Right ventricle myocardium inferior (tissue), 1 donor: ENCODE measurements at regions of chr5 and their contacts with region 1.

Region 1: DNA sequence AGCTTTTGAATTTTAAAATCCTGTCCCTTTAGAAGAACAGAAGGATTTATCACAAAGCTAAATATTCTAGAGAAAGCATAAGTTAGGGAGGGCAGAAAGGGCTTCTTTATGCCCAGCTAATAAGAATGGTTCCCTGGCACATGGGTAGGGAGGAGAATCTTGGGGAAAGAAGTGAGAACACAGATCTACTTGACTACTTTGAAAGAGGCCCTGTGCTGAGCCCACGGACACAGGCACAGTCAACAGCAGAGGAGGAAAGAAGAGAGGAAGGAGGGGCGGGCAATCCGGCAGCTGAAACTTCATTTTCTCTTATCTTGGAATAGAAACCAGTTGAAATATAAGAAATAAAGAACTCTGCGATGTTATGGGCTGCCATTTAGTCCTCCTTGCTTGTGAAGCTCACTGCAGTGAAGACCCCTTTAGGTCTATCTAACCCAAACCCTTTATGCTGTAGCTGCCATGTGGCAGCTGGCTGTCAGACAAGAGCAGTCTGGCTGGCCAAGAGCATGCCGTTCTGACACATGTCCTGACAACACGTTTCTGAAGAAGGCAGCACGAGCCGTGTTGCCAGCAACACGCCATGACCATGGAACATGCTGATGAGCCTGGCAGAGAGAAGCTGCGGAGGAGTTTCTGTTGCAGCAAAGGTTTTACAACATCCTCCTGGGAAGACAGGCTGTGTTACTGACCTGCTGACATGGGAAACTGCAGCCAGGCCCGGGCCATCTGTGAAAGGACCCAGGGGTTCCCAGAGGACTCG is 34.2 kb downstream of the ABLIM3 start:
- DNase-seq: peak; percentile 82
- ATAC-seq: peak; percentile 88

Region 2: GRCh38 chr5:148826053-148826738 is 349.3 kb before region 1 on chr5 and contains the start of gene ADRB2:
- intact Hi-C with region 1: no loop called
- DNase-seq: peak; percentile 99
- ATAC-seq: peak; percentile 97
- total RNA-seq, gene ADRB2: 5.5 TPM

Region 3: GRCh38 chr5:149141224-149141956 is 34.1 kb before region 1 on chr5 and contains the start of gene ABLIM3:
- intact Hi-C with region 1: loop called (anchors 5 kb)
- DNase-seq: peak; percentile 89
- ATAC-seq: peak; percentile 88
- total RNA-seq, gene ABLIM3: 134 TPM

Region 4: DNA sequence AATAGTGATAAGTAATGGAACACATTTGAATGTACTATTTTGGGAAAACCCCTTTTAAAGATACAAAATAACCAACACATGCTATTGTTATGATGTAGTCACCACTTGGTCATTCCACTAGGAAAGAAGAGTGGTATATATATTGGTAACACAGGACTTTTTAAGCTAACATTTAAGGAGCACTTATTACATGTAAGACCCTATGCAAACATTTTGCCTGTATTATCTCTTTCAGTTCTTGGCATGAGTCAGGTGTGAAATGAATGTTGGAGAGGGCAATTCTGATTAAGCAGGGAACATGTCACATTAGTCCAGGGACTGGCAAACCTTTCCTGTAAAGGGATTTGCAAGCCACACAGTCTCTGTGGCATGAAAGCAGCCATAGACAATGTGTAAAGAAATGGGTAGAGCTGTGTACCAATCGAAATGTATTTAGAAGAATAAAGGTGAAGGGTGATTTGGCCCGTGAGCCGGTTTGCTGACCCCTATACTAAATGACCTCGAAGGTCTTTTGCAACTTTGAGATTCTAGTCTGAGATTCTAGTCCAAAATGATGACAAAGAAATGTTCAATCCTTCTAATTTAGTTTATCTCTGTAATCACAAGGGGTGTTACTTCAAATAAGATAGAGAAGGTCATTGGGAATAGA is 19.0 kb before region 1 on chr5:
- intact Hi-C with region 1: loop called (anchors 2 kb)
- DNase-seq: no peak
- ATAC-seq: peak; percentile 45

Region 5: GRCh38 chr5:149215478-149216090 is 40.1 kb after region 1 on chr5:
- intact Hi-C with region 1: loop called (anchors 5 kb)
- DNase-seq: no peak
- ATAC-seq: peak; percentile 24